Heart right ventricle (tissue), 16 donors: ENCODE measurements at regions of chr16 and their contacts with region 1.

Region 1: DNA sequence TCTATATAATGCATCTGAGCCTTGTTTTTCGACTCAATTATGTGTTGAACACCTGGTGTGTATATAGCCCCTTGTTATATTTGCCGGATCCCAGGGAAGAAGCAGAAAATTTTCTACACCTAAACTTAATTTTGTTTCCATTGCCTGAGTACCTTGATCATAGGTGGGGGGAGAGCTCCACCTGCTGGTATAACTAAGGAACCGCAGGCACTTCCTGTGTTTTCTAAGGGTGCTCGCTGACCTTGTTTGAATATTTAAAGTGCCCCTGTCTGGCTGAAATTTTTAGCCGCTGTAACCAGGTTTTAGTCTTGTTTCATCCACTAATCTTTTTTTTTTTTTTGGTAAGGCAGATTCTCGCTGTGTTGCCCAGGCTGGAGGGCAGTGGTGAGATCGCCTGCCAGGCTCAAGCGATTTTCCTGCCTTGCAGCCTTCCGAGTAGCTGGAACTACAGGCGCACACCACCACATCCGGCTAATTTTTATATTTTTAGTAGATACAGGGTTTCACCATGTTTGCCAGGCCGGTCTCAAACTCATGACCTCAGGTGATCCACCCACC is 6.5 kb upstream of the NUBP1 start:
- DNase-seq: peak in 1 of 2 donors; percentile 73
- ATAC-seq: peak; percentile 19 to 83 (median 70)
- H3K4me3 ChIP-seq: peak overlapping the region in 4 of 10 donors; percentile 17 to 28 (median 20)
- H3K27ac ChIP-seq: peak overlapping the region; percentile 63 to 90 (median 82)
- H3K4me1 ChIP-seq: peaks cover 6 to 28% (median 22%) of the 10 kb centered on the region in 9 donors
- H3K27me3 ChIP-seq: no peaks in the 10 kb centered on the region
- CTCF ChIP-seq: peak; percentile 85 to 97 (median 94)

Region 2: GRCh38 chr16:10256784-10257641 is 480.1 kb before region 1 on chr16:
- intact Hi-C with region 1: loop called in 7 of 10 experiments (anchors 1 to 10 kb)
- DNase-seq: peak; percentile 17 to 34
- ATAC-seq: peak; percentile 27 to 75 (median 60)
- H3K4me3 ChIP-seq: no peak overlapping the region
- H3K27ac ChIP-seq: no peak overlapping the region
- H3K4me1 ChIP-seq: peaks cover 0 to 13% (median 0%) of the 10 kb centered on the region in 9 donors
- H3K27me3 ChIP-seq: peaks cover 0 to 21% (median 9%) of the 10 kb centered on the region in 7 donors
- CTCF ChIP-seq: peak; percentile 46 to 85 (median 73)

Region 3: DNA sequence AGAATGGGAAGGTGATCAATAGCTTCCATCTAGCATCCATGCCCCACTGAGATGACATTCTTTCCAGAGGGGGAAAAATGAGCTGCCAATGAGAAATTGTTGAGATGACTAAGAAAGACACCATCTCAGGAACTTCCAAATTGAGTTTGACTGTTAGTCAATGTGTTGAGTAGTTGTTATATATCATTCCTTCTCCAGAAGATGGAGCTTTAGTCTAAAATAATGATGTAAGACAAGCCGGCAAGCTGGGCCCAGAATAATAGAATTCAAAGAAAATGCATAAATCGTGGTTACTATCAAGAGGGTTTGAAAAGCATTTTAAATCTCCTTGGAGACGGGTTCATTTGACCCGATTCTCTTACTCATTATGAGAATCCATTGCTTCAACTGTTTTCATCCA is 422.3 kb before region 1 on chr16:
- intact Hi-C with region 1: loop called in 4 of 10 experiments (anchors 5 to 10 kb)
- DNase-seq: no peak
- ATAC-seq: peak in 2 of 8 donors; percentile 39 to 55
- H3K4me3 ChIP-seq: no peak overlapping the region
- H3K27ac ChIP-seq: no peak overlapping the region
- H3K4me1 ChIP-seq: no peaks in the 10 kb centered on the region
- H3K27me3 ChIP-seq: no peaks in the 10 kb centered on the region
- CTCF ChIP-seq: peak in 6 of 9 donors; percentile 32 to 59 (median 52)

Region 4: GRCh38 chr16:10509534-10510025 is 227.6 kb before region 1 on chr16:
- intact Hi-C with region 1: loop called in 5 of 10 experiments (anchors 1 to 5 kb)
- DNase-seq: peak in 1 of 2 donors; percentile 77
- ATAC-seq: peak; percentile 82 to 93 (median 88)
- H3K4me3 ChIP-seq: no peak overlapping the region
- H3K27ac ChIP-seq: no peak overlapping the region
- H3K4me1 ChIP-seq: peaks cover 0 to 9% (median 8%) of the 10 kb centered on the region in 9 donors
- H3K27me3 ChIP-seq: no peaks in the 10 kb centered on the region
- CTCF ChIP-seq: peak; percentile 74 to 89 (median 80)

Region 5: DNA sequence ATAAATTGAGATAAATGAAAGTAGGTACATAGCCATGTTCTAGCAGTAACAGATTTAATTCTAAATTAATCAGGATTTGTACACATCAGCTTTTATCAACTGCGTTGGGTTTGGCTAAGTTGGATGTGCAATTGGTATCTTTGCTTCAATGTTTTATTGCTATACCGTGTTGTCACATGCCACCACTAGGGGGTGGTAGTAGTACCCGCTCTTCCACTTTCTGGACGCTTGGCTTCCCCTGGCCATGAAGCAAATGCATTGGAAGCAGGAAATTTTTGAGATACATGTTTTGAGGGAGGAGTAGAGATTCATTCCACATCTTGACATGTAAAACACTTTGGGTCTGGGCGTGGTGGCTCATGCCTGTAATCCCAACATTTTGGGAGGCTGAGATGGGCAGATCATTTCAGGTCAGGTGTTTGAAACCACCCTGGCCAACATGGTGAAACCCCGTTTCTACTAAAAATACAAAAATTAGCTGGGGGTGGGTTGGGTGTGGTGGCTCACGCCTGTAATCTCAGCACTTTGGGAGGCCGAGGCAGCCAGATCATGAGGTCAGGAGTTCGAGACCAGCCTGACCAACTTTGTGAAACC is 215.4 kb before region 1 on chr16:
- intact Hi-C with region 1: loop called in 5 of 10 experiments (anchors 1 to 5 kb)
- DNase-seq: peak in 1 of 2 donors; percentile 58
- ATAC-seq: peak; percentile 49 to 86 (median 78)
- H3K4me3 ChIP-seq: no peak overlapping the region
- H3K27ac ChIP-seq: no peak overlapping the region
- H3K4me1 ChIP-seq: peaks cover 0 to 6% (median 0%) of the 10 kb centered on the region in 9 donors
- H3K27me3 ChIP-seq: no peaks in the 10 kb centered on the region
- CTCF ChIP-seq: peak; percentile 74 to 92 (median 83)

Region 6: GRCh38 chr16:10579965-10580882 is 156.9 kb before region 1 on chr16 and contains the start of gene EMP2:
- intact Hi-C with region 1: loop called in 5 of 10 experiments (anchors 1 to 5 kb)
- DNase-seq: peak; percentile 86 to 89
- ATAC-seq: peak; percentile 87 to 92 (median 88)
- H3K4me3 ChIP-seq: peak within 1 kb of the TSS; percentile 80 to 98 (median 88)
- H3K27ac ChIP-seq: peak within 1 kb of the TSS; percentile 92 to 99 (median 97)
- H3K4me1 ChIP-seq: peaks cover 25 to 54% (median 44%) of the 10 kb centered on the region in 9 donors
- H3K27me3 ChIP-seq: peaks cover 0 to 32% (median 0%) of the 10 kb centered on the region in 7 donors
- CTCF ChIP-seq: peak; percentile 28 to 81 (median 64)
- total RNA-seq, gene EMP2: 44.6 to 108 (median 62.0) TPM

Region 7: DNA sequence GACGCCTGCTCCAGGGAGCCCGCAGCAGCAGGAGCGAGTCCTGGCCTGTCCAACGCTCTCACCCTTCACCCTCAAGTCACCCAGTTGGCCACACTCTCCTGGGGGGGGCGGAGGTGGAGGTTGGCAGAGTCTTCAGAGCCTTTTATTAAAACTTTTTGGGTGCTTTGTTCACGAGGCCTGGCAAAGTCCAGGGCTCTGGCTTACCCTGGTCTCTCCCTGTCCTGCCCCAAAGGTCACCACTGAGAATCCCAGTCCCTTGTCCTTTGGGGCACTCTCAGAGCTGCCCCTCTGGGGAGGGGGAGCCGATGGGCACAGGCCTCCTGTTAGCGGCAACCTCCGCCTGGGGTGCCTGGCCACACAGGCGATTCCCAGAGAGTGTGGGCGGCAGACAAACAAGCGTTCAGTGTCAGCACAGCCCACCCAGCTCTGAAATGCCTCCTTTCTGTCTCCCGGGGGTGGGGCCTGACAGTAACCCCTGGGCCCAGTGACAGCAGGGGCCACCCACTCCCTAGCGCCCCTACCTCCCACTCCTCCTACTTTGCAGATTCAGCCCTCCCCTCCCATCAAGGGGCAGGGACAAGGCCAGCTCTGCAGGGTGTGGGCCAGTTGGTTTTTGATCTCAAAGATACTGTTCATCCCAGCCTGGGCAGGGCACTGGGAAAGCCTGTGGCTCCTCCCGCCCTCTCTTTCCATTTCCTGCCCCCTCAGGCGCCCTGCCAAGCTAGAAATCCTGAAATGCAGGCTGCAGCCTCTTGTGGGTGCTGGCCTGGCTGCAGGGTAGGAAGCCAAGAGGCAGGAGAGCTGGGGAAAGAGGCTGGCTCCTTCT is 120.2 kb before region 1 on chr16:
- intact Hi-C with region 1: loop called in 1 of 10 experiments (anchors 10 kb)
- DNase-seq: peak; percentile 76 to 79
- ATAC-seq: peak; percentile 64 to 85 (median 81)
- H3K4me3 ChIP-seq: peak overlapping the region in 1 of 10 donors; percentile 8
- H3K27ac ChIP-seq: peak overlapping the region; percentile 39 to 87 (median 68)
- H3K4me1 ChIP-seq: peaks cover 10 to 44% (median 33%) of the 10 kb centered on the region in 9 donors
- H3K27me3 ChIP-seq: no peaks in the 10 kb centered on the region
- CTCF ChIP-seq: peak in 4 of 9 donors; percentile 20 to 39 (median 37)